K562 (cell line): ENCODE measurements at regions of chr15 and their contacts with region 1.

Region 1: GRCh38 chr15:63544258-63545026 is 40.0 kb downstream of the USP3 start:
- DNase-seq: peak in 2 of 4 experiments; percentile 27 to 29
- ATAC-seq: peak; percentile 69
- H3K4me3 ChIP-seq: no peak overlapping the region
- H3K27ac ChIP-seq: peak overlapping the region; percentile 53; the same call in 2 of the 3 replicates
- H3K4me1 ChIP-seq: peaks cover 6 to 16% of the 10 kb centered on the region in 2 experiments; a peak in 2 of 5 replicates
- H3K27me3 ChIP-seq: no peaks in the 10 kb centered on the region
- CTCF ChIP-seq: no peak
- EP300 ChIP-seq: no peak
- POLR2A ChIP-seq: no peak
- RAD21 ChIP-seq: no peak

Region 2: GRCh38 chr15:63514531-63514943 is 29.9 kb before region 1 on chr15:
- CTCF ChIA-PET with region 1: no interaction called
- POLR2A ChIA-PET with region 1: interaction called, 11 read pairs
- in situ Hi-C with region 1: no loop called
- intact Hi-C with region 1: no loop called
- DNase-seq: no peak
- ATAC-seq: no peak
- H3K4me3 ChIP-seq: no peak overlapping the region
- H3K27ac ChIP-seq: no peak overlapping the region
- H3K4me1 ChIP-seq: peaks cover 15 to 32% of the 10 kb centered on the region in 2 experiments
- H3K27me3 ChIP-seq: no peaks in the 10 kb centered on the region
- CTCF ChIP-seq: no peak
- EP300 ChIP-seq: no peak
- POLR2A ChIP-seq: no peak
- RAD21 ChIP-seq: no peak

Region 3: DNA sequence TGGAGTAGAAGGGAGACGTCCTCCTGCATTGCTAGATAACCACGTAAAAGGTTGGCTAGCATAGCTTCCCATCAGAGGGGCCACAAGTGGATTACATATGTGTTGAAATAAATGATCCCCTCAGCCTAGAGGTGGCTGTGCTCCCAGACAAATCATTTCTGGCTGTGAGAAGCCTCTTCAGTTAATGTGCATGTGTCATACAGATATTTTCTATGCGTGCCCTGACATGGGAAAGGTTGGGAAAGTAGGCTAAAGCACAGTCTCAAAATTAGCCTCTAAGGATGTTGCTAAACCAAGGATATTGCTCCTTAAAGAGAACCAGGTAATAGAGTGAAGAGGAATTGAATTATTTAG is 22.2 kb before region 1 on chr15:
- CTCF ChIA-PET with region 1: no interaction called
- POLR2A ChIA-PET with region 1: interaction called, 11 read pairs
- in situ Hi-C with region 1: no loop called
- intact Hi-C with region 1: no loop called
- DNase-seq: no peak
- ATAC-seq: peak; percentile 30
- H3K4me3 ChIP-seq: no peak overlapping the region
- H3K27ac ChIP-seq: peak overlapping the region; percentile 46; the same call in 2 of the 3 replicates
- H3K4me1 ChIP-seq: peaks cover 16 to 50% of the 10 kb centered on the region in 2 experiments; a peak in 4 of 5 replicates
- H3K27me3 ChIP-seq: no peaks in the 10 kb centered on the region
- CTCF ChIP-seq: no peak; a peak in 1 of 6 replicates
- EP300 ChIP-seq: no peak
- POLR2A ChIP-seq: no peak
- RAD21 ChIP-seq: no peak